GM23248 (cell line): ENCODE measurements at regions of chr11 and their contacts with region 1.

Region 1: GRCh38 chr11:128831174-128832120 is 35.6 kb downstream of the KCNJ1 start:
- DNase-seq: peak; percentile 83
- H3K4me3 ChIP-seq: no peak overlapping the region
- H3K27ac ChIP-seq: no peak overlapping the region
- H3K4me1 ChIP-seq: peaks cover 5% of the 10 kb centered on the region; the same call in 1 of the 2 replicates
- H3K27me3 ChIP-seq: no peaks in the 10 kb centered on the region

Region 2: DNA sequence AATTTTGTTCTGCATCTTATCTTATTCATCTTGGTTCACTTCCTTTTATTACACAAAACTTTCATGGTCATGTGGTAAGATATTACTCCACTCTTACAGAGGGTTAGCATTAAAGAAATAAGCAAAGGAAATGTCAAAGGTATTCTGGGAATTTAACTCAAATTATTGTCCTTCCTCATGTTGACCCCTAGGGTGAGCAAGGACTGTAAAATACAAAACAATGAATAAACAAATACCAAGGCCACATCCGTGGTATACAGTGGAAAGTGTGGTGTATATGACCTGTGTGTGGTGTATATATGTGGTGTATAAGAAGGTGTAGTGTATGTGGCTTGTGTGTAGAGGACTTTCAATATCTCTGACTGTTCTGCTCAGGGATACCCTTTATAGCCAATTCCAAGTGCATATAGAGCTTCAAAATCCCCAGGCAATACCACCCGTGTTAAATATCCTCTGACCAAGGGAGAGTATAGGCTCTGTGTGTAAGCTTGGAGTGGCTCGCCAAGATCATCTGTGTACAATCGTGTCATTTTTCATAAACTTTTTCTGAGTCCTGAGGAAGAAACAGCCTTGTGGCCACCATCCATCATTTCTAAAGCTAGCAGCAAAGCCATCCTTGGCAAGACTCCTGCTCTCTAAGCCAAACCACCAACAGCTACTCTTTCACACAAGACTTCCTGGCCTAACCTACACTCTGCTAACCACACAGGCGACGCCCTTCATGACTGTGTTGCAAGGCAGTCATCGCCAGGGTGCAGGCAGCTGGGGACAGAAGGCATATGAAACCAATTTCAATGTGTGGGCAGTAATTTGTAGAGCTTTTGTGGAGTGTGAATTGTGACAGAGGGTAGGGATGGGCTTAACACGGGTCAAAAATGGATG is 792.1 kb before region 1 on chr11:
- in situ Hi-C with region 1: loop called (anchors 10 kb)
- DNase-seq: peak; percentile 98
- H3K4me3 ChIP-seq: peak overlapping the region; percentile 24; the same call in 1 of the 2 replicates
- H3K27ac ChIP-seq: peak overlapping the region; percentile 70
- H3K4me1 ChIP-seq: peaks cover 38% of the 10 kb centered on the region
- H3K27me3 ChIP-seq: no peaks in the 10 kb centered on the region

Region 3: DNA sequence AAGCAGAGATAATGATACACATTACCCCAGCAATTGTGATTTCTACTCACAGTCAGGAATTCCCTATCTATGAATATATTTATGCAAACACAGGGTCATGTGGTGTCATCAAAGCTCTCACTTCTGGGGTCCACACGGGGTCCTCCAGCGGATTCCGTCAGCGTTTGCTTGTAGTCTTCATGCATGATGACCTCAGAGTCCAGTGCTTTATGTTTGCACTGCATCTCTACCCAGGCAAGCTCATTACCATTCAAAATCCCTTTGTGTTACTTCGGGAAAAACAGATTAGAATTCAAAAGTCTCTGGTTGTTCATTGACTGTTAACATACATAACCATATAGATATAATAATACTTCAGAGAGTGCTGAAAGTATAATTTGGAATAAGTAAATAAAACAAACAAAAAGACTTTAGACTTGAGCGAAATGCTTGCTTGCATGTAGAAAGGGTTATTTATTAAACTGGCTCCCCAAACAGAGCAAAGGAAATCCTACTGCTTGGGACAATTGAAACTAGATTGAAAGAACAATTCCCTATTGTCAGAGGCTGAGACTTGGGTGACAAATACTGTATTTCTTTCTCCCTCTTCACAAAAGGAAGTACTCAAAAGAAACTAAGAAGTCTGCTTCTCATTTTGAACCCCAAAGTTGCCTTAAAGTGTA is 667.2 kb before region 1 on chr11:
- in situ Hi-C with region 1: loop called (anchors 10 kb)
- DNase-seq: no peak
- H3K4me3 ChIP-seq: no peak overlapping the region
- H3K27ac ChIP-seq: no peak overlapping the region
- H3K4me1 ChIP-seq: no peaks in the 10 kb centered on the region
- H3K27me3 ChIP-seq: no peaks in the 10 kb centered on the region

Region 4: GRCh38 chr11:128279866-128280265 is 551.6 kb before region 1 on chr11:
- in situ Hi-C with region 1: loop called (anchors 10 kb)
- DNase-seq: peak; percentile 72
- H3K4me3 ChIP-seq: no peak overlapping the region
- H3K27ac ChIP-seq: peak overlapping the region; percentile 43
- H3K4me1 ChIP-seq: peaks cover 11% of the 10 kb centered on the region
- H3K27me3 ChIP-seq: no peaks in the 10 kb centered on the region

Region 5: DNA sequence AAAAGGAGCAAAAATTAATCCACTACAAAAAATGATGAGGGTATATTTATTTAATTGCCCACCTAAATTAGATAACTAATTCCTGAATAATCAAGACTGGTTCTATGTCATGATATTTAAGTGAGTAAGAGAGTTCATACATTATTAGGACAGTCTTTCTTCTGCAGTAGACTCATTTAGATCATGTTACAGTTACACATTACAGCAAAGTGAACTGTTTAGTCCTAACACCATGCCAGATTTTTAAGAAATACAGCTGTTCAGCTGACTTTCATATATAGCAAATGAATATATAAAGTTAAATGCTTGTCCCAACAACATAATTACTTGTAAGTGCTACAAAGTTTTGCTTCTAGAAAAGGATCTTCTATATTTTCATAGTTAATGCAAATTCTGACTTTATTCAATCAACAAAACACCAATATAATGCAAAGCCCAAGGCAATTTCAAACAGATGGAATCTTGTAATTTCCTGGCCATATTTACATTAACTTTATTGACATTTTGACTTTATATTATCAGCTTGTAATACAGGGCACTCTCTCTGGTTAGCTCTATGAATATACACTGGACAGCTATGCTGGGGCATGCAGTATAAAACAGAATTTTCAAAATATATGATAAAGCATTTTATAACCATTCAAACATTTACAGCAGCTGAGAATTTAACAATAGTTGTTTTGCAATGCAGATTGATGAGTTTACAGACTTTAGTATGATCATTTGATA is 157.0 kb after region 1 on chr11:
- in situ Hi-C with region 1: no loop called
- DNase-seq: no peak
- H3K4me3 ChIP-seq: no peak overlapping the region
- H3K27ac ChIP-seq: no peak overlapping the region
- H3K4me1 ChIP-seq: no peaks in the 10 kb centered on the region
- H3K27me3 ChIP-seq: no peaks in the 10 kb centered on the region